ENCODE measurements at regions of chr6 and their contacts with region 1.

Region 1: GRCh38 chr6:121430514-121431460 is 4.7 kb upstream of the GJA1 start:
- DNase-seq: no peak
- H3K4me3 ChIP-seq: no peak overlapping the region
- H3K27ac ChIP-seq: peak overlapping the region; percentile 44
- H3K4me1 ChIP-seq: peaks cover 36% of the 10 kb centered on the region
- H3K27me3 ChIP-seq: no peaks in the 10 kb centered on the region
- CTCF ChIP-seq: peak; percentile 53 to 73 (median 70)
- POLR2A ChIP-seq: no peak

Region 2: DNA sequence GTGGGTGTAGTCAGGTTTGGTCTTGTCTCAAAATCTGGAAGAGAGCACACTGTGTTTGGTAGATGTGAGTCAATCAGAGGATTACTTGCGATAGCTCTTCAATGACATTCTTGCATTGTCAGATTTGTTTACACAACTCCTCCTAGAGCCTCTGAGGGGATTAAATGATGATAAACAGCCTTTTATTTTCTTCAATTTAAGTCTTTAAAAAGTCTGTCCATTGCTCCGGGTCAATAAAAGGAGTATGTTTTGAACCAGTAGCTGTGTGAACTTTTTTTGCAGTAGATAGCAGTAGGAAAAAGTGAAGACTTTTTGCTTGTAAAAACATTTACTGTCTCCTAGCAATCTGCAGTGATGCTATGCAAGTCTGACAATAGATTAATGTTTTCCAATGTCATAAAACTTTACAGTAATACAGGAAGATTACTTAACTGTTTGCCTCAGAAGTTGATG is 54.6 kb after region 1 on chr6:
- intact Hi-C with region 1: no loop called
- DNase-seq: no peak
- H3K4me3 ChIP-seq: no peak overlapping the region
- H3K27ac ChIP-seq: no peak overlapping the region
- H3K4me1 ChIP-seq: peaks cover 11% of the 10 kb centered on the region
- H3K27me3 ChIP-seq: no peaks in the 10 kb centered on the region
- CTCF ChIP-seq: no peak
- POLR2A ChIP-seq: no peak

Region 3: DNA sequence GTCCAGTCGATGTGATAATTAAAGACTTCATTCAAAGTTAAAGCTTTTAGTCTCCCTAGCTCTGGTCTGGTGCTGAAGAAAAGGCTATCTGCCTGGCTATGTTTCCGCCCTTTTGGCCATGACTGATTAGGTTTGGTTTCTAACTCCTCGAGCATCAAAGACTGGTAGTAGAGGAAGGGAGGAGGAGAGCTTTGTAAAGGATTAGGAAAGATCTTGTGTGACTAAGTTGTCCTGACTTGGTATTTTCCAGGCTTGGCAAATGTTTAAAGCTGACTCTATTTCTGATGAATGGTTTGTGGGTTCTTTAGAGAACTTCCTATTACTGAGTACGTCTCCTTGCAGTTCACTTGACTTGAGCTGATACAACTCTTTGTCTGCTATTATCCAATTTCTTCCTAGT is 317.6 kb after region 1 on chr6:
- intact Hi-C with region 1: no loop called
- DNase-seq: no peak
- H3K4me3 ChIP-seq: no peak overlapping the region
- H3K27ac ChIP-seq: no peak overlapping the region
- H3K4me1 ChIP-seq: no peaks in the 10 kb centered on the region
- H3K27me3 ChIP-seq: no peaks in the 10 kb centered on the region
- CTCF ChIP-seq: no peak
- POLR2A ChIP-seq: no peak

Region 4: DNA sequence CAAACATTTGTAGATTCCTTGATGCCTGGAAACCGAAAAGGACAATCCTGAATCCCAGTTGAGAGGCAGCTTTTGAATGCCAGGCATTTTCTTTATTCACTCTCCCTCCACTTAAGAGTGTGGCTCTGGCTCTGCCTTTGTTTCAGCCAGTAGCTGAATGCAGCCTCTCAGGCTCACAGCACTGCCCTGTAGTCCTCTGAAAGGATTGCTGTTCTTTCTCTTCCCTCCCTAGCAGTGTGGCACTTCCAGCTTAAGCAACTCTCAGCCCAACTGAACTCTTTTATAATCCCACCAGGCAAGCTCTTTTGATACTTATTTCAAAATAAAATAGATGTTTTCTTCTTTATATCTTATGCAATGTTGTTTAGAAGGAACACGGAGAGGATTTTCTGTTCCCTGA is 420.3 kb after region 1 on chr6:
- intact Hi-C with region 1: loop called (anchors 10 kb)
- DNase-seq: no peak
- H3K4me3 ChIP-seq: no peak overlapping the region
- H3K27ac ChIP-seq: peak overlapping the region; percentile 56
- H3K4me1 ChIP-seq: peaks cover 26% of the 10 kb centered on the region
- H3K27me3 ChIP-seq: no peaks in the 10 kb centered on the region
- CTCF ChIP-seq: no peak
- POLR2A ChIP-seq: no peak